ENCODE measurements at regions of chr19 and their contacts with region 1.

Region 1: DNA sequence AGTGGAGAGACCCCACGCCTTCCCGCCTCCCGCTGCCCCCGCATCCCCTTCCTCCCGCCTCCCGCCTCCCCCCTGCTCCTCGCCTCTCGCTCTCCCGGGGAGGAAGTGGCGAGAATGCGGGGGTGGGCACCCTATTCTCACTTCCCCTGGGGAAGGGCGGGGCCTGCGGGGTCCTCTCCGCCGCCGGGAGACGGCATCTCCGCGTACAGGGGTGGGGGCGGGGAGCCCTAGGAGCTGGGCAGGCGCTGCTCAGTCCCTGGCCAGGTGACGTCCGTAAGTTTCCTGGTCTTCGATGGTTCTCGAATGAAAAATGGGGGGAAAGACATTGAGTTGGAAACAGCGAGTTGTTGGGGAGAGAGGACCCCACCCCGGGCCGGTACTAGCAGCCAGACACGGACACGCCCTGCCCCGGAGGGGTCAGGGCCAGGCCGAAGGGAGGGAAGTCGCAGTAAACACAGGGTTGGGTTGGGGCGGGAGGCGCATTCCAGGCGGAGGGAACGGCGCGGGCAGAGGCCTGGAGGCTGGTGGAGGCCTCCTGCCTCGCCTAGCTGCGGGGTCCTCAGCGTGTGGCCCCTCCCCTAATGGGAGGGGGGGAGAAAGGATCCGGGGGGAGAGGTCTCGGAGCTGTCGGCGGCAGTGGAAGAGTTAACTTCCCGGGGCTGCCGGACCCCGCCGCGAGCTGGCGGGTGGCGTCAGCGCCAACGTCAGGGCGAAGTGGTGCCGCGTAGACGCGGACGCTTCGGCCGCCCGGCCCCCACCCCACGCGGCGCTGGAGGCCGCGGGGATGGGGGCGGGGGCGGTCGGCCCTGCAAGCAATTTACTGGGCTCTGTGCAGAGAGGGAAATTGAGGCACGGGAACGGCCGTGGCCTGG is 10.4 kb upstream of the JUND start:
- DNase-seq: peak; percentile 65 to 93
- ATAC-seq: peak; percentile 74 to 77
- H3K4me3 ChIP-seq: peak overlapping the region; percentile 56
- H3K27ac ChIP-seq: peak overlapping the region; percentile 99 to 100
- H3K4me1 ChIP-seq: peaks cover 30% of the 10 kb centered on the region
- CTCF ChIP-seq: no peak
- EP300 ChIP-seq: peak; percentile 45 to 87; a peak in 3 of 5 replicates
- POLR2A ChIP-seq: peak; percentile 29
- RAD21 ChIP-seq: no peak

Region 2: DNA sequence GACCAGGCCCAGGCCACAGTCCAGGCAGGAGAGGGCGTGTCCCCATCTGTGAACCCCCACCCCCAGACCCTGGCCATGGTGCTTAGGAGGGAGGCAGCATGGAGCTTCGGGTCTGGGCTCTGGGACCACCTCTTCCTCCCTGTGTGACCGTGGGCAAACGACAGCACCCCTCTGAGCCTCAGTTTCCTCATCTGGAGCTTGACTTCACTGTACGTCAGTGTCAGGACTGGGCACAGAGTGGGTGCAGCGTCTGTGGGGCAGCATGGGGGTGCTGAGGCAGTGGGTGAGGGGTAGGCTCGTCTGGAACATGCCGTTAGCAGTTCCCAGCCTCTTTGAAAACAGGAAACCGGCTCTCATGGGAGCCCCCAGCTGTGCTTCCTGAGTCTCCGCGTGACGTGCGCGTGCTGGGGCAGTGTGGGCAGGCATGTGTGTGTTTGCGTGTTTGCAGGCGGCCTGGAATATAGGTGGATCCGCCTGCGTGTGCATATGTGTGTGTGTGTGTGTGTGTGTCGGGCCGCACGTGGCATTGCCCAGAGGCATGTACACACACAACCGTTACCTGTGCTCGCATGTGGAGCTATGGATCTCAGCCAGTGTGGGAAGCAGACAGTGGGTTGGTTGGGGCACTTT is 268.1 kb before region 1 on chr19:
- CTCF ChIA-PET with region 1: no interaction called
- POLR2A ChIA-PET with region 1: no interaction called
- DNase-seq: no peak
- ATAC-seq: no peak
- H3K4me3 ChIP-seq: no peak overlapping the region
- H3K27ac ChIP-seq: peak overlapping the region; percentile 37 to 91; a peak in 2 of 6 replicates
- H3K4me1 ChIP-seq: peaks cover 32% of the 10 kb centered on the region
- CTCF ChIP-seq: no peak
- EP300 ChIP-seq: no peak
- POLR2A ChIP-seq: no peak; the same call in 1 of the 2 replicates
- RAD21 ChIP-seq: no peak

Region 3: DNA sequence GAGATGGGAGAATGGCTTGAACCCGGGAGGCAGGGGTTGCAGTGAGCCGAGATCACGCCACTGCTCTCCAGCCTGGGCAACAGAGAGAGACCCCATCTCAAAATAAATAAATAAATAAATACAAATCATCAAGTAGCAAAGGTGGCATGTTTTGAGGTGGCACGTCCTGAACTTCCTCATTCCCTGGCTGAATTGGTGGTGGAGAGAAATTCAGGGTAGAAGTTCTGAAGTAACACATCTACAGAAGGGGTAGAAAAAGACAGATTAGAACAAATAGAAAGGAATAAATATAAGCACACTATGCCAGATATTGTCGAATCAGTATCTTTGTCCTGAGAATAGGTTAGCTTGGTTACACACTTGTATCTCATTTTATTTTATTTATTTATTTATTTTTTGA is 111.9 kb before region 1 on chr19:
- CTCF ChIA-PET with region 1: no interaction called
- POLR2A ChIA-PET with region 1: no interaction called
- DNase-seq: no peak
- ATAC-seq: no peak
- H3K4me3 ChIP-seq: no peak overlapping the region
- H3K27ac ChIP-seq: no peak overlapping the region
- H3K4me1 ChIP-seq: no peaks in the 10 kb centered on the region
- CTCF ChIP-seq: no peak
- EP300 ChIP-seq: no peak
- POLR2A ChIP-seq: no peak
- RAD21 ChIP-seq: no peak

Region 4: GRCh38 chr19:18274781-18275356 is 17.0 kb before region 1 on chr19:
- CTCF ChIA-PET with region 1: interaction called, 57 read pairs
- POLR2A ChIA-PET with region 1: interaction called, 235 read pairs
- DNase-seq: peak; percentile 72 to 81
- ATAC-seq: peak; percentile 77 to 87
- H3K4me3 ChIP-seq: peak overlapping the region; percentile 25; the same call in 1 of the 3 replicates
- H3K27ac ChIP-seq: peak overlapping the region; percentile 88 to 94
- H3K4me1 ChIP-seq: peaks cover 52% of the 10 kb centered on the region
- CTCF ChIP-seq: no peak
- EP300 ChIP-seq: no peak
- POLR2A ChIP-seq: no peak
- RAD21 ChIP-seq: no peak

Region 5: DNA sequence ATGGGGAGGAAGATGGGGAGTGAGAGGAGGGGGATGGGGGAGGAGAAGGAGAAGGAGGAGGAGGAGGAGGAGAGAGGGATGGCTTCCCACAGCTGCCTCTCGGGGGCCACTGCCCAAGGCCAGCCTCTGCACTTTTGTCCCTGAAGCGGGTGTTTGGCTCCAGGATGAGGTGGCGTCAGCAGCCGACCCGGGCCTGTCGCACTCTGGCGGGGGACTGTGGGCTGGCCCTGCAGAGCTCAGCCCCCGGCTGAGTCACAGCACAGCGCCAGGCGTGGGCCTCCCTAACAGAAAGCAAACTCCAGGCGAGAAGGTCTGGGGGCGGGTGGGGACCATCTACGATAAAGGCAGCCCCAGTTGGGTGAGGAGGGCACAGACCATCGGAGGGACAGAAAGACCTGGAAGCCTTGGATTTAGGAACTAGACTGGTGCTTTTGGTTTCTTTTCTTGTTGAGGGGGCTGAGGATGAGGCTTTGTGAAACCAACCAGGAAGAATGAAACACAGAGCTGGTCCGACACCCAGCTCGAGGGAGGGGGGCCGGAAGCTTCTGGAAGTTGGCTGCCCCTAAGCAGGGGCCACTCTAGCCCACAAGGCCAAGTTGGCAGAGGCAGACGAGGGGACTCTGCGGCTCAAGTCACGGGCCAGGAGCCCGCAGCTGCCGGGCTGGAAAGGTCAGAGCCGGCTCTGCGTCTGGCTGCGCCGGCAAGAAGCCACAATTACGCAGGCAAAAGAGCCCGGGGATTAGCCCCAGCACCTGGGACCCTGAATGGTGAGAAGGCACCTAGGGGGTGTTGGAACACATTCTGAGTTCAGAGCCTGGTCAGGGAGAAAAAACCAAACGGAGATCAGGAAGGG is 12.9 kb after region 1 on chr19:
- CTCF ChIA-PET with region 1: interaction called, 5 read pairs
- POLR2A ChIA-PET with region 1: interaction called, 51 read pairs
- DNase-seq: peak in 1 of 2 experiments; percentile 79
- ATAC-seq: peak; percentile 77 to 79
- H3K4me3 ChIP-seq: peak overlapping the region; percentile 34
- H3K27ac ChIP-seq: peak overlapping the region; percentile 99 to 100
- H3K4me1 ChIP-seq: peaks cover 53% of the 10 kb centered on the region
- CTCF ChIP-seq: no peak
- EP300 ChIP-seq: no peak
- POLR2A ChIP-seq: no peak; the same call in 1 of the 2 replicates
- RAD21 ChIP-seq: no peak